Right lobe of liver (tissue), 6 donors: ENCODE measurements at regions of chr1 and their contacts with region 1.

Region 1: GRCh38 chr1:211885747-211886522 is 55.4 kb upstream of the LPGAT1 start:
- DNase-seq: peak in 1 of 3 donors; percentile 66
- ATAC-seq: peak; percentile 70 to 88 (median 78)
- H3K4me3 ChIP-seq: no peak overlapping the region
- H3K27ac ChIP-seq: peak overlapping the region; percentile 49 to 78 (median 72)
- H3K4me1 ChIP-seq: peaks cover 0 to 31% (median 11%) of the 10 kb centered on the region in 4 donors
- H3K27me3 ChIP-seq: no peaks in the 10 kb centered on the region
- CTCF ChIP-seq: no peak
- POLR2A ChIP-seq: no peak

Region 2: DNA sequence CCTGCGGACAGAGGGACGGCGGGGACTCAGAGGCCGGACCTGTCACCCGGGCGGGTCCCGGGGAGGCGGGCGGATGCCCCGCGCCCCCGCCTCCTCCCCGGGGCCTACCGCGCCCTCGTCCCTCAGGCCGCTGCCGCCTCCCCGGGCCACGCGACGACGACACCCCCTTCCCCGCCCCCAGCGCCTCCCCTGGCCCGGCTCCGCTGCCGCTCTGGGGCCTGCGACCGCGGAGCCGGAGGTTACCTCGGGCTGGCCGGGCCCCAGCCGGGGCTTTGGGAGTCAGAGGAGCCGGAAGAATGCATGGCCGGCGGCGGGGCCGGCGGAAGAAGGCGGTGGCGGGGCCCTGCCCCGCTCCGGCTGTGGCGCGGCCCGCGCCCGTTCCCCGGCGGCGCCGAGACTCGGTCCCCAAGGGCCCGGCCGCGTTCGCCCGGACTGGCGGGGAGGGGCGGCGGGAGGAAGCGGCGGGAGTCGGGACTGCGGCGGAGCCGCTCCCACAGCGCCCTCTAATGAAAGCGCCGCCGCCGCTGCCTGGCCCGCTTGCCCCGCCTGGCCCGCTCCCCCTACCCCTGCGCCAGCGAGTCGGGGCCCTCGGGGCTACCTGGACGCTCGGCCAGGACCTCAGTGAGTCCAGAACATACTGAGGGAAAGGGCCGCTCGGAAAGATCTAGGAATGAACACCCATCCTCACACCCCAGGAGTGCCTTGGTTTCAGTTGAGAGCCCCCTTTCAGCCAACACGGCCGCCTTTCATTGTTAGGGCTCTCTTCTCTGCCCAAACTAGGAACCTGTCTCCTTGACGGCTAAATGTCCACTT is 55.4 kb before region 1 on chr1 and contains the start of gene LPGAT1:
- intact Hi-C with region 1: loop called in 1 of 2 experiments (anchors 10 kb)
- DNase-seq: peak; percentile 89 to 90 (median 90)
- ATAC-seq: peak; percentile 82 to 94 (median 90)
- H3K4me3 ChIP-seq: peak within 1 kb of the TSS; percentile 26 to 76 (median 64)
- H3K27ac ChIP-seq: peak within 1 kb of the TSS; percentile 92 to 96 (median 95)
- H3K4me1 ChIP-seq: peaks cover 0 to 31% (median 0%) of the 10 kb centered on the region in 4 donors
- H3K27me3 ChIP-seq: no peaks in the 10 kb centered on the region
- CTCF ChIP-seq: peak; percentile 57 to 82 (median 64)
- POLR2A ChIP-seq: peak; percentile 80
- total RNA-seq, gene LPGAT1: 32.0 to 141 (median 55.7) TPM

Region 3: DNA sequence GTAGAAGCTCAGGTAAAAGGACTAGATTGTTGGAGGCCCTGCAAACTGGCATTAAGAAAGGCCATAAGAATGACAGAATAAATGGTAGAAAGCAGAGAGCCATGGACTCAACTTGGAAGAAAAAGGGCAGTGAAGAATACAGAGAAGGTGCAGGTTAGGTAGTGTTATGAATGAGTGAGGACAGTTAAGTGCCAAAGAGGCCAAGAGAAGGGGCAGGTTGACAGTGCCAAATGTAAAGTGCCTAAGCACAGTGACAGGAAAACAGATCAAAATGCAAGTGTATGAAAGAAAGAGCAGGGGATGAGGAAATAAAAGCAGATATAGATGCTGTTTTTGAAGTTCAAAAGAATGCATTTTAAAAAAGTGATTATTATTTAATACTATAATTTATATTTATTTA is 105.8 kb after region 1 on chr1:
- intact Hi-C with region 1: no loop called
- DNase-seq: no peak
- ATAC-seq: no peak
- H3K4me3 ChIP-seq: no peak overlapping the region
- H3K27ac ChIP-seq: no peak overlapping the region
- H3K4me1 ChIP-seq: peaks cover 0 to 19% (median 0%) of the 10 kb centered on the region in 4 donors
- H3K27me3 ChIP-seq: no peaks in the 10 kb centered on the region
- CTCF ChIP-seq: no peak
- POLR2A ChIP-seq: no peak